ENCODE measurements at regions of chr12 and their contacts with region 1.

Region 1: DNA sequence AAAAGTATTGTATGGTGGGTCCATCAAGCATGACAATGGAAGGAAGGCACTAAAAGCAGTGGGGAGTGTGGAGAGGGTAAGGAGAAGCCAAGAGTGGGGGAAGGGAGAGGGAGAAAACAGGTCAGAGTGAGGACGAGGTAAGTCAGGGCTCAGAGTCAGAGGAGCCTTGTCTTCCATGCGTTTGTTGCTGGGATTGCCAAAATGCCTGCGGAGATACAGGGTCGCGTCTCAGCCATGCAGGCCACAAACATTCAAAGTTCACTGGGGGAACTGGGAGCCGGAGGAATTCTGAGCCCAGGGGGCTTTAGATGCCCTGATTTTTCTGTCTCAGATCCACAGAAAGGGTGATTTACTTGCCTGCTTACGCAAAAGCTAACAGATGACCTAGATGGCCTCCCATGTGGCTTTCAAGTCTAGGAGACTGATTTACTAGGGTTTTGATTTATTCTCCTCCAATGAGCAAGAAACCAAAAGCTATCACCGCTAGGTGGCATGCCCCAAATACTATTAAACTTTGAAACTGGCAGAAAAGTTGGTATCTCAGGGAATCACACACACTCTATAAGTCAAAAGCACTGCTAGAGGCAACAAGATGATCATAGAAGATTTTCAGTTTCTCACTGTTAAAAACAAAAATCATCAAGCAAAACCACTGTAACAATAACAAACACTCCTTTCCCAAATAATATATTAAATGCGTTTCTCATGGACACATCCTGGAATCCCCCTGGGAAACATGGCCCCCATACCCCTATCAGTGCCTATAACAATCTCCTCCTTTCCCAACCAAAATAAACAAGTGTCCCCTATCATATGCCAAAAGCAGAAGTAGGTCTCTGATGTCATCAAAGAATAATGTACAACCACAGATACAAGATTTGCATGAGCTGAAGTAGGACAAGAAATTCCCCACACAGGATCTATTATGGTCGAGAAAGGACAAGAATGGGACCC is 26.6 kb upstream of the MDM1 start:
- DNase-seq: peak; percentile 74
- ATAC-seq: peak; percentile 90
- H3K4me3 ChIP-seq: no peak overlapping the region
- H3K27ac ChIP-seq: peak overlapping the region; percentile 72
- H3K4me1 ChIP-seq: peaks cover 14% of the 10 kb centered on the region
- H3K27me3 ChIP-seq: no peaks in the 10 kb centered on the region
- CTCF ChIP-seq: peak; percentile 56 to 69 (median 66)
- EP300 ChIP-seq: peak; percentile 83; a peak in 3 of 4 replicates
- POLR2A ChIP-seq: no peak
- RAD21 ChIP-seq: peak; percentile 83

Region 2: DNA sequence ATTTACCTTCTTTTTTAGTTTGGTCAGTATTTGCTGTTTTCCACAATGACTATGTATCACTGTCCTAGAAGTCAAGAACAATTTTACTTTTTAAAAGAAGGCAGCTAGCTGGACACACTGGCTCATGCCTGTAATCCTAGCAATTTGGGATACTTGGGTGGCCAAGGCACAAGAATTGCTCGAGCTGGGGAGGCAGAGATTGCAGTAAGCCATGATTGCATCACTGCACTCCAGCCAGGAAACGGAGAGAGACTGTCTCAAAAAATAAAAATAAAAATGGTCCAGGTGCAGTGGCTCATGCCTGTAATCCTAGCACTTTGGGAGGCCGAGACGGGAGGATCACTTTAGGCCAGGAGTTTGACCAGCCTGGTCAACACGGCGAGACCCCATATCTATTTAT is 55.0 kb before region 1 on chr12:
- CTCF ChIA-PET with region 1: no interaction called
- POLR2A ChIA-PET with region 1: no interaction called
- RAD21 ChIA-PET with region 1: no interaction called
- SMC1A ChIA-PET with region 1: no interaction called
- in situ Hi-C with region 1: no loop called
- intact Hi-C with region 1: no loop called
- DNase-seq: no peak
- ATAC-seq: no peak
- H3K4me3 ChIP-seq: no peak overlapping the region
- H3K27ac ChIP-seq: no peak overlapping the region
- H3K4me1 ChIP-seq: peaks cover 8% of the 10 kb centered on the region
- H3K27me3 ChIP-seq: no peaks in the 10 kb centered on the region
- CTCF ChIP-seq: no peak
- EP300 ChIP-seq: no peak
- POLR2A ChIP-seq: no peak
- RAD21 ChIP-seq: no peak

Region 3: GRCh38 chr12:68381476-68382219 is 22.8 kb after region 1 on chr12:
- CTCF ChIA-PET with region 1: interaction called, 5 read pairs
- POLR2A ChIA-PET with region 1: no interaction called
- RAD21 ChIA-PET with region 1: no interaction called
- SMC1A ChIA-PET with region 1: interaction called, 108 read pairs
- in situ Hi-C with region 1: no loop called
- intact Hi-C with region 1: no loop called
- DNase-seq: no peak
- ATAC-seq: no peak
- H3K4me3 ChIP-seq: no peak overlapping the region
- H3K27ac ChIP-seq: no peak overlapping the region
- H3K4me1 ChIP-seq: peaks cover 2% of the 10 kb centered on the region; the same call in 1 of the 2 replicates
- H3K27me3 ChIP-seq: no peaks in the 10 kb centered on the region
- CTCF ChIP-seq: no peak
- EP300 ChIP-seq: no peak
- POLR2A ChIP-seq: no peak
- RAD21 ChIP-seq: no peak

Region 4: DNA sequence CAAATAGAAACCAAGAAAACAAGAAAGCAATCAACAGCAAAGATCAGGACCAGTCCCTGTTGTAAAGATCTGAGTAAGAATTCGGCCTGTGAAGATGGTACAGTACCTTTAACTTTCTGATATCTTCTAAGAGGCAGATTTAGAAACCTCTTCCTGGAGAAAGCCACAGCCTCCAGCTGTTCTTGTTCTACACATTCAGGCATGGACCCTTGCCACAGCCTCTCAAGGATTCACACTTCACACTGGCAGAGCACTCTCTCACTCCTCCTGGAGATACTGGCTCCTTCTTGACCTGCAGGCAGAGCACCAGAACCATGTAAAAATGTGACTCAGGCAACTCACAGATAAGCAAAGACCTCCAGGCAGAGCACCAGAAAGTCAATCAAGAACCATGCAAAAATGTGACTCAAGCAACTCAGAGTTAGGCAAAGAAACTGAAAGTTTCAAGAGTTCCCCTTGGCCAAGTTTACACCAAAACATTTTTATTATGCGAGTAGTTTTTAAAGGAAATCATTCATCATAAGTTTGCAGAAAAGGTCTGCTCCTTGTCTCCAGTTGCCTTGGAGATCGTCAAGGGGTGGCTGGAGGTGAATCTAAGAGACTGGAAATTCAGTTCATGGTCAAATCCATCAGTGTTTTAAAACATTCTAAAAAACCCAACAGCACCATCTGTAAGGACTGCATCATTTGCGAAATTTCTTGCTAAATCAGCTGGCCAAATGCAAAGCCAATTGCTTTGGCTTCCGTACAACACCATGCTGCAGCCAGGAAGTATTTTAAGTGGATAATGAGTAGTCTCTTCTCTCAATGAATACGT is 92.7 kb after region 1 on chr12:
- CTCF ChIA-PET with region 1: interaction called, 8 read pairs
- POLR2A ChIA-PET with region 1: interaction called, 4 read pairs
- RAD21 ChIA-PET with region 1: interaction called, 10 read pairs
- SMC1A ChIA-PET with region 1: interaction called, 28 read pairs
- in situ Hi-C with region 1: no loop called
- intact Hi-C with region 1: no loop called
- DNase-seq: peak; percentile 88
- ATAC-seq: peak; percentile 78
- H3K4me3 ChIP-seq: peak overlapping the region; percentile 51
- H3K27ac ChIP-seq: peak overlapping the region; percentile 73
- H3K4me1 ChIP-seq: peaks cover 36% of the 10 kb centered on the region
- H3K27me3 ChIP-seq: no peaks in the 10 kb centered on the region
- CTCF ChIP-seq: no peak
- EP300 ChIP-seq: peak; percentile 32 to 50; a peak in 2 of 4 replicates
- POLR2A ChIP-seq: no peak
- RAD21 ChIP-seq: no peak

Region 5: GRCh38 chr12:68633614-68634529 is 275.1 kb after region 1 on chr12:
- CTCF ChIA-PET with region 1: no interaction called
- POLR2A ChIA-PET with region 1: no interaction called
- RAD21 ChIA-PET with region 1: interaction called, 7 read pairs
- SMC1A ChIA-PET with region 1: interaction called, 6 read pairs
- in situ Hi-C with region 1: no loop called
- intact Hi-C with region 1: loop called (anchors 5 kb)
- DNase-seq: no peak
- ATAC-seq: peak; percentile 40
- H3K4me3 ChIP-seq: peak overlapping the region; percentile 15; the same call in 1 of the 2 replicates
- H3K27ac ChIP-seq: peak overlapping the region; percentile 41
- H3K4me1 ChIP-seq: peaks cover 55% of the 10 kb centered on the region
- H3K27me3 ChIP-seq: no peaks in the 10 kb centered on the region
- CTCF ChIP-seq: no peak
- EP300 ChIP-seq: peak in 1 of 2 experiments; percentile 38; a peak in 1 of 4 replicates
- POLR2A ChIP-seq: no peak
- RAD21 ChIP-seq: no peak